ENCODE measurements at regions of chr20 and their contacts with region 1.

Region 1: GRCh38 chr20:10427060-10427692 is 6.8 kb downstream of the MKKS start:
- DNase-seq: no peak

Region 2: DNA sequence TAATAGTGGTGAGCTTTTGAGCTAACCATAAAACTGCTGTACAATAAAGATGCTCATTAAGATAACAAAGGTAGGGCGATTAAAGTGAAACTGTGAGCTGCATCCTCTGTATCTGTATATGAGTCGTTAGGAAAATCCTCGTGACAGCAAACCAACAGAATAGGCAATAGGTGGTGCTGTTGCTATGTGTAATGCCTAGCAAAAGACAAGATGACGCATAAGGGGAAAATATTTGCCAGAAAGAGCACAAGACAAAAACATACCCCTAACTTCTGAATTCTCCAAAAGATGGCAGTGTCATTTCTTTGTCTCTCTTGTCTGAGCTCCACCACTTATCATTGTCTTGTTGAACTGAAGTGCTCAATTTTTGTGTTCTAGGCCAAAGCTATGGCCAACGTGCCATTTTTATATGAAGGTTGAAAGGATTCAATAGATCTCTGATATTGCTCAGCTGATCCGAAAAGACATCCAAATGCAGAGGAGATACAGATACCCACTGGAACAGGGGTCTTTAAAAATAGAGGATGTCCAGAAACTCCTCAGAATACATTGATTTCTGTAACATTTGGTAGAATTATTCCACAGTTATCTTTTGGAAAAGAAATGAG is 448.7 kb before region 1 on chr20:
- intact Hi-C with region 1: loop called (anchors 5 kb)
- DNase-seq: no peak

Region 3: GRCh38 chr20:10357974-10358373 is 69.2 kb before region 1 on chr20:
- intact Hi-C with region 1: loop called (anchors 10 kb)
- DNase-seq: no peak